ENCODE measurements at regions of chr12 and their contacts with region 1.

Region 1: DNA sequence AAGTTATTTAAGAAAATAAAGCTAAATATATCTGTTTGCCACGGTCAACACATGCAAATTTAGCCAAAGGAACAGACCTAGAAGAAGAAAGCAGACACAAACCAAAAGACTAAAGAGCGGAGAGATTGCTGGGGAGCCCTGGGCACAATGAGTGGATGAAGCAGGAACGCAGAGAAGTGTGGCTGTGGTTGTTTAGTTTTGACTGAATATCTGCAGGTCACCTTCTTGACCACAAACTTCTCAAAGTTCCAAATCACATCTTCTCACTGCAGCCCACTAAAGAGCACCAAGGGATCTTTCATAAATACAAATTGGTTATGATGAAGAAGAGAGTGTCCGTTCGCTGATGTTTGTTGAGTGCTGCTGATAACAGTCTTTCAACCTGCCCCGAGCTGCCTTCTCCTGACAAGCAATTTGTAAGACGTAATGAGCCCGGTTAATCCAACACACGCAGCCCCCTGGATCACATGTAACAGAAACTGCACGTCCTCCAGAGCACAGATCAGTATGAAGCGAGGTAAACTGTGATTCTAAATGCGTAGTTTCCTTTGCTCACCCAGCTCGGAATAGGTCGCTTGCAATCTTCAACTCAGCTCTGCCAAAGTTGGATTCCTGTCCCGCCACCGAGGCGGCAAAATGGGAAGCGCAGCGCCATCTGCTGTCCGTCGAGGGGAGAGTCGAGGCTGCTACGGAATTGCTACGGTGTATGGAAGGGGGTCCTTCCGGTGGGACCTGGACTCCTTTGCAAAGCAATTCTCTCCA is 120.8 kb downstream of the GXYLT1 start:
- DNase-seq: peak; percentile 80
- H3K4me3 Mint-ChIP-seq: peak overlapping the region; percentile 51
- H3K27ac Mint-ChIP-seq: no peak overlapping the region
- H3K4me1 Mint-ChIP-seq: peaks cover 8% of the 10 kb centered on the region
- H3K27me3 Mint-ChIP-seq: peaks cover 7% of the 10 kb centered on the region

Region 2: GRCh38 chr12:40946612-40947194 is 1077.2 kb before region 1 on chr12:
- CTCF ChIA-PET with region 1: interaction called, 5 read pairs
- intact Hi-C with region 1: loop called (anchors 1 kb)
- DNase-seq: no peak
- H3K4me3 Mint-ChIP-seq: no peak overlapping the region
- H3K27ac Mint-ChIP-seq: no peak overlapping the region
- H3K4me1 Mint-ChIP-seq: no peaks in the 10 kb centered on the region
- H3K27me3 Mint-ChIP-seq: peaks cover 9% of the 10 kb centered on the region

Region 3: DNA sequence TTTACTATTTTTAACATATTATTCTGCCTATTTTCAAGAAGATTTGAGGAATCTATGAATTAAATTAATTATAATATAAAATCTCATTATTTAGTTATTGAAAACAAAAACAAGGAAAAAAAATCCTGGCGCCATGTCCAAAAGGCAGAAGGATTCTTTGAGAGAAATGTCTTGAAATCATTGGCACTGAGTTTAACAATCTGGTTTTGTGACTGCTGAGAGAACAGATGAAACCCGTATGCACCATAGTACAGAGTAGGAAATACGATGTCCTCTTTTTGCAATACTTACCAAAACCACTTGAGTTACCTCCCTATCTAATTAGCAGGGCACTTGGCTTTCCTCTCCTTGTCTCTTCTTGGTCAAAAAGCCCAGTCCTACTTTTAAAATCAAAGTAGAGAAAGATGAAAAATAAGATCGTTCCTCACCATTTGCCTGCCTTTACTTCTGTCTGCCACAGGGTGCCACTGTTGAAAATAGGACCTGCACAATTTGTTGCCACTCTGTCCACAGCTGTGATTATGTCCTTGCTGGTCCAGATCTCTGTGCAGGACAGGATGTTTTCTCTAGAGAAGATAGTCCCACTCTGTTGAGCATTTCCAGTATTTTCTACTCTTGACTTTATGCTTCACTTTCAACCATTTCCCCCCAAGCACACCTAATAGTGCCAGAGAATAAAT is 656.0 kb before region 1 on chr12:
- CTCF ChIA-PET with region 1: no interaction called
- intact Hi-C with region 1: loop called (anchors 10 kb)
- DNase-seq: no peak
- H3K4me3 Mint-ChIP-seq: no peak overlapping the region
- H3K27ac Mint-ChIP-seq: no peak overlapping the region
- H3K4me1 Mint-ChIP-seq: no peaks in the 10 kb centered on the region
- H3K27me3 Mint-ChIP-seq: no peaks in the 10 kb centered on the region

Region 4: DNA sequence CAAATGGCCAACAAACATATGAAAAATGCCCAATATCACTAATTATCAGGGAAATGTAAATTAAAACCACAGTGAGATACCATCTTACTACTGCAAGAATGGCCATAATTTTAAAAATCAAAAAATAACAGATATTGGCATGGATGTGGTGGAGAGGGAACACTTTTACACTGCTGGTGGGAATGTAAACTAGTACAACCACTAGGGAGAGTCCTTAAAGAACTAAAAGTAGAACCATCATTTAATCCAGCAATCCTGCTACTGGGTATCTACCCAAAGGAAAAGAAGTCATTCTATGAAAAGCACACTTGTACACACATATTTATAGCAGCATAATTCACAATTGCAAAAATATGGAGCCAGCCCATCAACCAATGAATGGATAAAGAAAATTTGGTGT is 338.9 kb before region 1 on chr12:
- CTCF ChIA-PET with region 1: interaction called, 3 read pairs
- intact Hi-C with region 1: loop called (anchors 1 kb)
- DNase-seq: no peak
- H3K4me3 Mint-ChIP-seq: no peak overlapping the region
- H3K27ac Mint-ChIP-seq: no peak overlapping the region
- H3K4me1 Mint-ChIP-seq: no peaks in the 10 kb centered on the region
- H3K27me3 Mint-ChIP-seq: no peaks in the 10 kb centered on the region

Region 5: DNA sequence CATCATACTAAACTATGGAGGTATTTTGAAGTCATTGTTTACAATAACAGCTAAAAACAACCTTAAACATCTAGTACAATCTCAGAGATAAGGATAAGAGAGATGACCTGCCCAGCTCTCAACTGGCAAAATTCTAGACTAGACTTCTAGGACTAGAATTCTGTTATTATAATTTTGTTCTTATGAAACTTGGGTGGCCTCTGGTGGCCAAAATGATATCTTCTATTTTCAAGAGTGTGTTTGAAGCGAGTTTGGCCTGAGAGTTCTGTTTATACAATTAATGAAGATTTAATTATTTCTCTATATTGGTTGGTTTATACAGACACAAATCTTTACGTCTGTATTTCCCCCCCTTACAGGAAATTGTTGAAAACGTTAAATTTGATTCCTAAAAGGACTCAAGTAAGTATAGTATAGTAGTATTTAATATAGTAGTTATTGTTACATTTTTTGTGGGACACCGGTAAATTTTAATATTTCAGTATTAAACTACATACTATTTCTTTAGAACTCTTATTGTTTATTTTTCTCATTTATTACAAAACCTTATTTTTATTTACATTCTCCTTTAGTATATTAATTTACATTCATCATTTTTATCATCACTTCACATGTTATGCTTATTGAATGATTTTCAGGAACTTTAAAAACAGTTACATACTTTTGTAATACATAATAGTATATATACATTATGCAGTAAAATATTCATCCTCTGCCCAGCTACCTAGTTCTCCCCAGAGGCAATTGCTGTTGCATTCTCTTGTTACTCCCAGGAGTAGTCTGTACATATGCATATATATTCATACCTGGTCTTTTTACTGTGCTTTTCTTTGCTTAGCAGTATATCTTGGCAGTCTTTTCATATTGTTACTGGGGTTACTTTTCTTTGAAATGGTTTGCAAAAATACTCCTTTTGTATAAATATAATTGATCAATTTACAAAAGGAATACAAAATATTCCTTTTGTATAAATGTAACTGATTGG is 308.7 kb after region 1 on chr12:
- CTCF ChIA-PET with region 1: interaction called, 4 read pairs
- intact Hi-C with region 1: loop called (anchors 5 kb)
- DNase-seq: peak; percentile 32
- H3K4me3 Mint-ChIP-seq: no peak overlapping the region
- H3K27ac Mint-ChIP-seq: no peak overlapping the region
- H3K4me1 Mint-ChIP-seq: peaks cover 58% of the 10 kb centered on the region
- H3K27me3 Mint-ChIP-seq: no peaks in the 10 kb centered on the region

Measured in activated naive CD4-positive, alpha-beta T cell treated with anti-CD3 and anti-CD28 coated beads for 36 hours (primary cell).